PC-9 (cell line): ENCODE measurements at regions of chrX and their contacts with region 1.

Region 1: DNA sequence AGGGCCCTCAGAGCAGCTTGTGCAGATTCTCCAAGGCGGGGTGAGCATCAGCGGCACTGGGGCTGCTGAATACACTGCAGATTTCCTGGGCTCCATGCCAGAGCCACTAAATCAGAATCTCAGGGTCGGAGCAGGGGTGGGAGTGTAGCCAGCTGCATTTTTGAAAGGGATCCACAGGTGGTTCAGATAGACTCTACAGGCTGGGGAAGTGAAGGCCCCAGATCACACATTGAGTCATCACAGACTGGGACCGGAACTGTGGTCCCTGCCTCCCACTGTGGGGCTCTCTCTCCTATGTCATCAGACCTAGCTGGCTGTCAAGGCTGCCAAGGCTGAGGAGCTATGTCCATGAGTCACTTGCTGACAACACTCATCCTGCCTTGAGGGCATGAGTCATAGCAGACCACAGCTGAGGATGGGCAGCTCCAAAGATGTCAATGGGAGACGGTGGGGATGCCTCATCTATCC is 162.3 kb upstream of the MAMLD1 start:
- DNase-seq: peak; percentile 85 to 98
- H3K4me3 ChIP-seq: no peak overlapping the region
- H3K27ac ChIP-seq: no peak overlapping the region
- H3K4me1 ChIP-seq: peaks cover 15% of the 10 kb centered on the region
- H3K27me3 ChIP-seq: no peaks in the 10 kb centered on the region
- CTCF ChIP-seq: no peak

Region 2: GRCh38 chrX:150049647-150050046 is 151.2 kb before region 1 on chrX:
- CTCF ChIA-PET with region 1: no interaction called
- POLR2A ChIA-PET with region 1: no interaction called
- intact Hi-C with region 1: loop called (anchors 5 kb)
- DNase-seq: no peak
- H3K4me3 ChIP-seq: no peak overlapping the region
- H3K27ac ChIP-seq: no peak overlapping the region
- H3K4me1 ChIP-seq: peaks cover 31% of the 10 kb centered on the region
- H3K27me3 ChIP-seq: no peaks in the 10 kb centered on the region
- CTCF ChIP-seq: no peak